ENCODE measurements at regions of chr18 and their contacts with region 1.

Region 1: DNA sequence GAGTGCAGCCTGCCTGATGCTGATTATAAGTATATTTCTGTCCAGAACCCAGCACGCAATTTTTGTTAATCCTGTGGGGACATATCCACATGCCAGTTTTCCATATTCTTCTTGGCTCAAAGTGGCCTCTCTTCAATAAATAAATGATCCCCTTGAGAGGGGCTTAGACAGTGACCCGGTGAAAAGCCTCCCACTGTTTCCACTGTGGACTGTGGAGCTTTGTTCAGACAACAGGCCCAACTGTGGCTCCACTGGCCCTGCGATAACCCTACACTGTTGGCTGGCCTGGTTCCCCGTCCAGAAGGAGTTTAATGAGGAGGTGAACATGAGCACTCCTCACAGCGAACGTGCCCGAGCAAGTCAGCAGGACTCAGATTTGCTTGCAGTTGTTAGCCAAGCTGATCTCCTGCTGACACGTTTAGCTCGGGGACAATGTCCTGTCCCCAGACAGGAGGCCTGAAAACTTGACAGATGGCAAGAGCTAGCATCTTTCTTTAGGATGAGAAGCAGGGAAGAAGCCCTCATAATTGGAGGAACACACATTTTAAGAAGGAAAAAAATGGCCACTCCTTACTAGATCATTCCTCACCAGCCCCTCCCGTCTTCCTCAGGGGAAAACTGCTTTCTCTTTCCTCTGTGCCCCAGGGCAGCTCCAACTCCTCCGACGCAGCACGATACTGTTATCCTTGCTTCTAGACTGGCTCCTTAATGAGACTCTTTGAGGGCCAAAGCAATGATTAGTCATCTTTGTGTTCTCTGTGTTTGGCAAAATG is 20.0 kb upstream of the MTCL1 start:
- DNase-seq: no peak
- ATAC-seq: no peak

Region 2: DNA sequence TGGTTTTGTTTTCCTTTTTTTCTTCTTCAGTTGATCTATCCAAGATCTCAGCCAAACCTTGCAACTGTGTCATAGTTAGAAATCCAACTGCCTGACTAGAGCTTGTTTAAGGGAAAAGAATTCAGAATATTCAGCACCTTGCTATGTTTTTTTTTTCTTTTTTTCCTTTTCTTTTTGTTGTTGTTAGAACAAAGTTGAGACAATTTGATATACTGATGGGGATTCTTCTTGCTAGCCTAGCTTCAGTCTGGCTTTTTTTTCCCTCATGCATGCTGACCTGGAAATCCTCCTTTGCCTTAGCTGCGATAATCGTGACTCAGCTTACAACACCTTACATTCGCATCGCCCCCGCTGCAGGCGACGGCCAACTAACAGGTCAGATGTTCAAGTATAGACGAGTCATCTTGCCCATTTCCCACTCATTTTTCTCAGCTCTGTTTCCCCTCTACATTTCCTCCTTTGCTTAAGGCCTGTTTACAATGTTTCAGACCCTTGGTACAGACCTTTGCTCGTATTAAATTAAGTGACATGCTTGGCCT is 563.3 kb before region 1 on chr18:
- intact Hi-C with region 1: no loop called
- DNase-seq: no peak
- ATAC-seq: no peak

Region 3: DNA sequence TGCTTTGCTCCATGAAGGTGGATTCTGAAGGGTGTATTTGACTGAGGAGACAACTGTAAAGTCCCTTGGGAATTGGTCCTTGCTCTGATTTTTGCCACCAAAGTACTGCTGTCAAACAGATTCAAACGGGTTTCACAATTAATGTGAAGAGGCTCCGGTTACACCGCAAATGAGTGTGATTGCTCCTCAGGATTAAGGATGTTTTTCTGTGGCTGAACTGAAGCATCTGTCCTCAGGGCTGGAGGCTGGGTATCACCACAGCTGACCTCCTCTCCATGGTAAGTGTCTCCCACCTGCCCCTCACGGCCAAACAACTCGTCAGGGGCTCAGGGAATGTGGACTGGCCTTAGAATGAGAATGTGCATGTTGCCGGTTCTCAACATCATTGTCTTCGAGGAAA is 286.8 kb after region 1 on chr18:
- intact Hi-C with region 1: no loop called
- DNase-seq: no peak
- ATAC-seq: no peak

Region 4: DNA sequence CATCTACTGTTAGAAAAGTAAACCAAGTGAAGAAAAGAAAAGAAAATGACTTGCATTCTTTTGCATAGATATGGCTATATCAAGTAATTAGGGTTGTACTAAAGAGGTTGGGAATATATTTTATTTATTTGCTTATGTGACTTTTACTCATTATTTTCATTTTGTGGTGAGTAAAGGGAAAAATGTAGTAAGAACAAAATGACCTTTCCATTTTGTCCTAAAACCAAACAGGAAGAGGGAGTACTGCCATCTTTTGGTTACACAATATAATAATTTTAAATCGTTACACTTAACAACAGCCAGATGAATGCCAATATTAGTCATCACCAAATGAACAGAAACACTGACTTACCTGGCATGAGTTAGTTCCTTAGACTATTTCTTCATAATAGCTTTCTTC is 369.9 kb after region 1 on chr18:
- intact Hi-C with region 1: loop called in 1 of 2 experiments (anchors 10 kb)
- DNase-seq: no peak
- ATAC-seq: no peak